Activated naive CD8-positive, alpha-beta T cell treated with anti-CD3 and anti-CD28 coated beads, Interleukin-2, amount 10 ng/mL, durations not matched to agents 7 days and 5 days (primary cell): ENCODE measurements at regions of chr15 and their contacts with region 1.

Region 1: DNA sequence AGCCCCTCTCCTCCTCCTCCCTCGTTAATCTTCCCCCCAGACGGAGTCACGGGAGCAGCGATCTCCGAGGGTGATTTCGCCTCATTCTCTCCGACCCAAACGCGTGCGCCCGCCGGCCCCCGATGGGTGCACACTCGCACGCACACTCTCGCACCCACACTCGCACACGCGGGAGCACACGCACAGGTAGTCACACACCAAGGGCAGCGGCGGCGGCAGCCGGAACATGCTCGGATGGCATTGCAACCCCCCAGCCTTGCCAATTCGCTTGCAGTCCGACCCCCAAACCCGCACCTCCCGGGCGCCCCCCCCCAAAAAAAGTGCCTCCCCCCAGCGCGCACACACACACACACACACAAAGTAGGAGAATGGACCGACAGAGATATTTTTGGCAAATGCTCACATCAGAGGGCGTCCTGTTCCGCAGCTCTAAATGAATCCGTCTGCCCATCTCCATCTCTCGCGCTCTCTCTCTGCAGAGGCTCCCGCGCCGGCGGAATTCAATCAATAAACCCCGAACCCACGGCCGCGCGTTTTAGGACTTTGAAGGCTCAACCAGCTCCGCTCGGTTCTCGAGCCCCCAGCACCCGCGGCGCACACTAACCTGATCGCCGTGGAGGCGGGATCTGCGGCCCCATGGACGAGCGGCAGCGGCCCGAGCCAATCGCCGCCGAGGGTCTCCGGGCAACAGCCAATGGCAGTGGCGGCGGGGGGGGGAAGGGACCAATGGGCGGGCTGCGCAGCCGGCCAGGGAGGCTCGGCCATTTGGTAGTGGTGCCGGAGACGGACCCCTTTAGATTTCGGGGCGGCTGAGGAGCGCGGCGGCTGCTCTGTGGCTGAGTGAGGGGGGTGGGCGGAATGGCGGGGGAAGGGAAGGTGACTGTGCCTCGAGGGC is at the start of gene ANP32A:
- DNase-seq: peak; percentile 98
- ATAC-seq: peak; percentile 70
- H3K4me3 Mint-ChIP-seq: peak within 1 kb of the TSS; percentile 94
- H3K27ac Mint-ChIP-seq: peak within 1 kb of the TSS; percentile 94
- H3K4me1 Mint-ChIP-seq: peaks cover 29% of the 10 kb centered on the region
- H3K27me3 Mint-ChIP-seq: no peaks in the 10 kb centered on the region
- total RNA-seq, gene ANP32A: 174 to 177 TPM

Region 2: DNA sequence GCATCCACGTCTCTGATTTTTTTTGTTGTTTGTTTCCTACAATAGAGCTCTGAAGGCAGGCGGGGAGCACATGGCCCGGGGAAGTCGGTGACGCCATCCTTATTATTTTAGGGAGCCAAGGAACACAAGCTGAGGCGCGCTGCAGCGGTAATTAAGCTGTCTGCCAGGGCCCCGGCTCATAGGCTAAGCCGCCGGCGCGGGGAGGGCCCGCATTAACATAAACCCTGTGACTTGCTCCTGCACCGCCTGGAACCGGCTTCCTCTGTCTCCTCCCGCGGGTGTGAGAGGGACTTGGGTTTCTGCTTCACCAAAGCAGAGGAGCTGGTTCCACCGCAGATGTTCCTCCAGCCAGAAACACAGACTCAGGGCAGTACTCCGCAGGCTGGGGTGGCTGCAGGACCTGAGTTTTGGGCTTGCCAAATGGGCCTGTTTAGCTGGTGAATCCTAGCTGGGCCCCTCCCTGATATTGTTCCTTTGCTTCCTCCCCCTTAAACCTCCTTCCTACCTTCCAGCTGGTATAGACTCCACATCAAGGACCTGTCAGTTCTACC is 25.2 kb before region 1 on chr15:
- POLR2A ChIA-PET with region 1: interaction called, 95 read pairs
- DNase-seq: peak; percentile 64
- ATAC-seq: peak; percentile 72
- H3K4me3 Mint-ChIP-seq: peak overlapping the region; percentile 62
- H3K27ac Mint-ChIP-seq: peak overlapping the region; percentile 71
- H3K4me1 Mint-ChIP-seq: peaks cover 80% of the 10 kb centered on the region
- H3K27me3 Mint-ChIP-seq: no peaks in the 10 kb centered on the region